Dorsolateral prefrontal cortex (tissue), 120 donors: ENCODE measurements at regions of chr20 and their contacts with region 1.

Region 1: GRCh38 chr20:1437235-1437904 is 29.3 kb downstream of the NSFL1C start:
- DNase-seq: peak; percentile 57 to 85 (median 78)
- H3K4me3 ChIP-seq: no peak overlapping the region
- H3K27ac ChIP-seq: no peak overlapping the region
- H3K27me3 ChIP-seq: no peaks in the 10 kb centered on the region
- CTCF ChIP-seq: peak; percentile 63 to 92 (median 85)

Region 2: GRCh38 chr20:1313236-1313964 is 124.0 kb before region 1 on chr20:
- intact Hi-C with region 1: loop called (anchors 2 kb)
- DNase-seq: peak; percentile 62 to 85 (median 74)
- H3K4me3 ChIP-seq: peak overlapping the region; percentile 23 to 71 (median 55)
- H3K27ac ChIP-seq: peak overlapping the region in 53 of 59 donors; percentile 2 to 84 (median 57)
- H3K27me3 ChIP-seq: no peaks in the 10 kb centered on the region
- CTCF ChIP-seq: peak; percentile 84 to 100 (median 99)

Region 3: DNA sequence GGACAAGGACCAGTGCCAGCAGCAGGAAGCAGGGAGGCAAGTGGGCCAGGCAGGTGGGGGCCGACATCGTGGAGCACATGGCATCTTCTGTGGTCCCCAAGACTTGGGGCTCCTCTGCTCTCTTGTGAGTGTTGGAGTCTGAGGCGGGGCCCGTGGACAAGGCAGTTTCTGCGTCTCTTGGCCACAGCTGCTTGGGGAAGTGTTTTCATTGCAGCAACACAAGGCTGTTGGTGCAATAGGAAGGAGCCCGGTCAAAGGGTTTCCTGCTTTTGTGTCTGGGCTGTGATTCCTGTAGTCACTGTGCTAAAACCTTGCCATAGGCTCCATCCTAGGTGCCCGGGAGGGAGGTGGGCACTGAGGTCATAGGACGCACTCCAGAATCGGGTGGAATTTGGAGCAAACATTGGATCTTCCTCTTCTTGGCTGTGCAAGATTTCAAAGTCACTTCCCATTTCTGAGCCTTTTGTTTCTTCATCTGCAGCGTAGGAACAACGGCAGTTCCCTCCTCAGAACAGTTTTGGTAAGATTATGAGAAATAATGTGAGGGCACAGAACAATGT is 54.0 kb after region 1 on chr20 and contains the start of gene SIRPB2:
- intact Hi-C with region 1: no loop called
- DNase-seq: peak in 1 of 10 donors; percentile 39
- H3K4me3 ChIP-seq: peak within 1 kb of the TSS in 41 of 59 donors; percentile 4 to 50 (median 32)
- H3K27ac ChIP-seq: peak within 1 kb of the TSS in 44 of 59 donors; percentile 8 to 79 (median 44)
- H3K27me3 ChIP-seq: no peaks in the 10 kb centered on the region
- CTCF ChIP-seq: no peak
- total RNA-seq, gene SIRPB2: 0.28 to 16.0 (median 3.5) TPM